ENCODE measurements at regions of chr3 and their contacts with region 1.

Region 1: GRCh38 chr3:172039436-172040077 is at the start of gene FNDC3B:
- DNase-seq: peak; percentile 97
- H3K4me3 ChIP-seq: peak within 1 kb of the TSS; percentile 86 to 100 (median 94)
- H3K27ac ChIP-seq: peak within 1 kb of the TSS; percentile 96
- H3K4me1 ChIP-seq: peaks cover 34% of the 10 kb centered on the region
- H3K27me3 ChIP-seq: no peaks in the 10 kb centered on the region
- CTCF ChIP-seq: no peak
- POLR2A ChIP-seq: peak; percentile 75
- total RNA-seq, gene FNDC3B: 295 and 302 TPM in 2 replicates

Region 2: DNA sequence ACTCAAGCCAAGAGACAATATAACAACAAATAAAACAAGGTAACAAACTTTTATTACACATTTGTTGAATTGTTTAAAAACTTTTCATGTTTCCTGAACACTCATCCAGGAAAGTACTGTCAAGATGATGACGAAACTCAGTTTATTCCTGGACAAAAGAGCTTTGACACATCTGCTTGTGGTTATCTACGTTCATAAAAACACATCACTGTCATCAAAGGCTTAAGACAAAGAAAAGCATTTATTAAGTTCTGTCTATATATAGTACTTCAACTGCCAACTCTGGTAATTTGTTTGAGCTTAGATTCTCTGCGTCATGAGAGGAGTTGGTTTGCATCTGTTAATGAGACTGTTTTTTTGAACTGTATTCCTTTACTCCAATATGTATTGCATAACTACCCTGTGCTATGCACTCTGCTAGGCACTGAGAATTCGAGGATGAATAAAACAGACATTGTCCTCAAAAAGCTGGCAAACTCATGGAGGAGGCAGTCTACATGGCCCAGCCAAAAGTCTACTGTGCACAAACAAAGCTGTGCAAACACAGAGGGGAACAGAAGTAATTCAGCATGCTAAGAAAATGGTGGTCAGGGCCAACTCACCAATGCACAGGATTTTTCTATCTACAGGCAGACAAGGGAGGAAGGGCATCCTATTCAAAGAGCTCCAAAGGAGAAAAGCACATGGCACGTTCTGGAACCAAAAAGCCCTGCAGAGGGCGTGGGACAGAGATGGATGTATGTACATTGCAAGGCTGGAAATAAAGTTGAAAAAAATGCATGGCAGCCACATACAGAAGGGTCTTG is 250.8 kb before region 1 on chr3:
- CTCF ChIA-PET with region 1: interaction called, 6 read pairs
- POLR2A ChIA-PET with region 1: no interaction called
- dilution Hi-C with region 1: no loop called
- intact Hi-C with region 1: loop called (anchors 2 kb)
- DNase-seq: peak; percentile 92
- H3K4me3 ChIP-seq: no peak overlapping the region
- H3K27ac ChIP-seq: peak overlapping the region; percentile 99
- H3K4me1 ChIP-seq: peaks cover 75% of the 10 kb centered on the region
- H3K27me3 ChIP-seq: no peaks in the 10 kb centered on the region
- CTCF ChIP-seq: no peak
- POLR2A ChIP-seq: no peak

Region 3: GRCh38 chr3:171860830-171861535 is 178.6 kb before region 1 on chr3:
- CTCF ChIA-PET with region 1: interaction called, 4 read pairs
- POLR2A ChIA-PET with region 1: no interaction called
- dilution Hi-C with region 1: no loop called
- intact Hi-C with region 1: loop called (anchors 1 kb)
- DNase-seq: peak; percentile 96
- H3K4me3 ChIP-seq: no peak overlapping the region
- H3K27ac ChIP-seq: peak overlapping the region; percentile 95
- H3K4me1 ChIP-seq: peaks cover 57% of the 10 kb centered on the region
- H3K27me3 ChIP-seq: no peaks in the 10 kb centered on the region
- CTCF ChIP-seq: no peak
- POLR2A ChIP-seq: no peak

Region 4: DNA sequence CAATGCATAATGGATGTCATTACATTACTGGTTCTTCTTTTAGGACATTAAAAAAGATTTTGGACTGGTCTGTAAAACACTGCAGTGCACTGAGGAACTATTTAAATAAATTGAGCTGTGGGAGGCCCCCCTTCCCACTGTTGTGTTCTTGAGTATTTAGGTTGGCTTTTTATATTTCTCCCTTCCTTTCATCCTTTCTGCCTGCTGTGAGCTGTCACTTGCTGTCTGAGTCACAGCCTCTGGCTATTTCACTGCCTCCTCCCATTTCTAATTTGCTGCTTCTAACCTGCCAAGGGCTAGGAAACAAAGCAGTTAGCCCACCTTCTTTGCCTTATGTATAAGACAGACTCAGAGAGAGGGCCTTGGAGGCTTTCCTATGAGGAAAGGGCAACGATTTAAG is 89.2 kb before region 1 on chr3:
- CTCF ChIA-PET with region 1: interaction called, 6 read pairs
- POLR2A ChIA-PET with region 1: no interaction called
- dilution Hi-C with region 1: no loop called
- intact Hi-C with region 1: loop called (anchors 1 kb)
- DNase-seq: peak; percentile 72
- H3K4me3 ChIP-seq: no peak overlapping the region
- H3K27ac ChIP-seq: no peak overlapping the region
- H3K4me1 ChIP-seq: peaks cover 18% of the 10 kb centered on the region
- H3K27me3 ChIP-seq: no peaks in the 10 kb centered on the region
- CTCF ChIP-seq: no peak
- POLR2A ChIP-seq: no peak

Region 5: DNA sequence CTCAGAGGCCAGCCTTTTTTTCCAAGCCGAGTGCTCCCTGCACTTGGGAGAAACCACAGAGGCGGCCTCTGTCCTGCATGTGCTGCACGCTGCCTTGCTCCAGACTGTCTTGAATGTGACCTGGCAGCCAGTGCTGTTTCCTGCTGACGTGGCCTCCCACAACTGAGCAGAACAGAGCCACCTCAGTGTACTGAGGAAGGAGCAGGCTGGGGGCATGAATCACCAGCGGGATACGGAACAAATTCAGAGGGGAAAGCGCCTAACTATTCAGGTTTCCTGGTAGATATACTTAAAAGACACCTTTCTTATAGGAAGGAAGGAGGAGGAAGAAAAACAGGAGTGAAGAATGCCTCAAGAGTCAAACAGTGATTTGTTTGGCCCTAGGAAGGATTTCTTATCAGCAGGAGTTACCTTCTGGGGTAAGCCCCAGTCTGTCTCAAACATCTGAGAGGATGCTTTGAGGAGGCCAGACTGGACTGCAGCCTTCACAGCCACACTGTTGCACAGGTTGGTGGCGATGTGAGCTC is 113.8 kb after region 1 on chr3:
- CTCF ChIA-PET with region 1: interaction called, 3 read pairs
- POLR2A ChIA-PET with region 1: no interaction called
- dilution Hi-C with region 1: no loop called
- intact Hi-C with region 1: loop called (anchors 1 kb)
- DNase-seq: peak; percentile 98
- H3K4me3 ChIP-seq: no peak overlapping the region
- H3K27ac ChIP-seq: peak overlapping the region; percentile 95
- H3K4me1 ChIP-seq: peaks cover 86% of the 10 kb centered on the region
- H3K27me3 ChIP-seq: no peaks in the 10 kb centered on the region
- CTCF ChIP-seq: no peak
- POLR2A ChIP-seq: peak; percentile 72

Region 6: GRCh38 chr3:172224560-172225214 is 185.1 kb after region 1 on chr3:
- CTCF ChIA-PET with region 1: no interaction called
- POLR2A ChIA-PET with region 1: no interaction called
- dilution Hi-C with region 1: no loop called
- intact Hi-C with region 1: no loop called
- DNase-seq: no peak
- H3K4me3 ChIP-seq: no peak overlapping the region
- H3K27ac ChIP-seq: no peak overlapping the region
- H3K4me1 ChIP-seq: no peaks in the 10 kb centered on the region
- H3K27me3 ChIP-seq: no peaks in the 10 kb centered on the region
- CTCF ChIP-seq: no peak
- POLR2A ChIP-seq: no peak